ENCODE measurements at regions of chr22 and their contacts with region 1.

Region 1: DNA sequence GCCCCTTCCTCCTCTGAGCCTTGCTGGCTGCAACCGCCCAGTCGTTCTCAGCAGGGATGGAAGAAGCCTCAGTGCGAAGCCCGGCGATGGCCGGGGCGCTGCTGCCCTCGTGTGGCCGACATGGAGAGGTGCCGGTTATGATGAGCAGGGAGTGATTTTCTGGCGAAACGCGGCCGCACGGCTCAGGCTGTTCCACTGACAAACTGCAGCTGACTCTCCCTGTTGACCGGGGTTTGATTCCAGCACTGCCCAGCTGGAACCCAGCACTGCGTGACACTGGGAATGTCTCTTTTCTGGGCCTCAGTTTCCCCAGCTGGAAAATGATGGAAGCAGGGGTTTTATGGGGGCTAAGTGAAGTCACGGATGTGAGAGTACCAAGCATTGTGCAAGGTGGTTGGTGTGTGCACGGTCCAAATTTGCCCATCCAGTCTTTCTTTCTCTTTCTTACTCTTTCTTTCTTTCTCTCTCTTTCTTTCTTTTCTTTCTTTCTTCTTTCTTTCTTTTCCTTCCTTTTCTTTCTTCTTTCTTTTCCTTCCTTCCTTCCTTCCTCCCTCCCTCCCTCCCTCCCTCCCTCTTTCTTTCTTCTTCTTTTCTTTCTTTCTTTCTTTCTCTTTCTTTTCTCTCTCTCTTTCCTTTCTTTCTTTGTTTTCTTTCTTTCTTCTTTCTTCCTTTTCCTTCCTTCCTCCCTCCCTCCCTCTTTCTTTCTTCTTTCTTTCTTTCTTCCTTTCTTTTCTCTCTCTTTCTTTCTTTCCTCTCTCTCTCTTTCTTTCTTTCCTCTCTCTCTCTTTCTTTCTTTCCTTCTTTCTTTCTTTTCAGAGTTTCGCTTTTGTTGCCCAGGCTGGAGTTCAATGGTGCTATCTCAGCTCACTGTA is 25.8 kb upstream of the MPPED1 start:
- DNase-seq: peak; percentile 78
- H3K4me3 Mint-ChIP-seq: no peak overlapping the region
- H3K27ac Mint-ChIP-seq: no peak overlapping the region
- H3K4me1 Mint-ChIP-seq: peaks cover 2% of the 10 kb centered on the region
- H3K27me3 Mint-ChIP-seq: peaks cover 20% of the 10 kb centered on the region

Region 2: GRCh38 chr22:43230971-43231723 is 154.9 kb before region 1 on chr22:
- CTCF ChIA-PET with region 1: interaction called, 8 read pairs
- intact Hi-C with region 1: loop called (anchors 1 kb)
- DNase-seq: peak; percentile 74
- H3K4me3 Mint-ChIP-seq: no peak overlapping the region
- H3K27ac Mint-ChIP-seq: no peak overlapping the region
- H3K4me1 Mint-ChIP-seq: peaks cover 2% of the 10 kb centered on the region
- H3K27me3 Mint-ChIP-seq: no peaks in the 10 kb centered on the region

Region 3: GRCh38 chr22:43273902-43274484 is 112.0 kb before region 1 on chr22:
- CTCF ChIA-PET with region 1: interaction called, 10 read pairs
- intact Hi-C with region 1: loop called (anchors 1 kb)
- DNase-seq: peak; percentile 62
- H3K4me3 Mint-ChIP-seq: no peak overlapping the region
- H3K27ac Mint-ChIP-seq: no peak overlapping the region
- H3K4me1 Mint-ChIP-seq: no peaks in the 10 kb centered on the region
- H3K27me3 Mint-ChIP-seq: no peaks in the 10 kb centered on the region

Region 4: DNA sequence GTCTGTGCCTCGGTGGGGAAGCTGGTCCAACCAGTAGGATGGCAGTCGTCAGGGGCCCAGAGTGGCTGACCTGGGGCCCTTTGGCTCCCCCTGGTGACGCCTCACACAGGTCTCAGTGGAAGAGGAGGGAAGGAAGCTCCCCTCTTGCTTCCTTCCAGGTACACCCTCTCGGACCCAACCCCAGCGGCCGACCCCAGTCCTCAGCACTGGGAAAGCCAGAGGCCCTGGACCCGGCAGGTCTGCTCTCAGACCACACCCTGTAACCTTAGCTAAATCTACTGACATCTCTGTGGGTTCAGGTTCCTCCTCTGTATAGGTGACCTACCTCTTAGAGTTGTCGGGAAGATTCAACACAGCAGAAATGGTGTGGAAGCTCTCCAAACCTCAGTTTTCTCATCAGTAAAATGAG is 39.5 kb before region 1 on chr22:
- CTCF ChIA-PET with region 1: interaction called, 27 read pairs
- intact Hi-C with region 1: loop called (anchors 2 kb)
- DNase-seq: peak; percentile 76
- H3K4me3 Mint-ChIP-seq: no peak overlapping the region
- H3K27ac Mint-ChIP-seq: no peak overlapping the region
- H3K4me1 Mint-ChIP-seq: peaks cover 14% of the 10 kb centered on the region
- H3K27me3 Mint-ChIP-seq: peaks cover 46% of the 10 kb centered on the region

Region 5: GRCh38 chr22:43396934-43397457 is 11.0 kb after region 1 on chr22:
- CTCF ChIA-PET with region 1: no interaction called
- intact Hi-C with region 1: no loop called
- DNase-seq: no peak
- H3K4me3 Mint-ChIP-seq: no peak overlapping the region
- H3K27ac Mint-ChIP-seq: no peak overlapping the region
- H3K4me1 Mint-ChIP-seq: no peaks in the 10 kb centered on the region
- H3K27me3 Mint-ChIP-seq: no peaks in the 10 kb centered on the region

Region 6: GRCh38 chr22:43481568-43482317 is 95.7 kb after region 1 on chr22:
- CTCF ChIA-PET with region 1: no interaction called
- intact Hi-C with region 1: loop called (anchors 1 kb)
- DNase-seq: peak; percentile 66
- H3K4me3 Mint-ChIP-seq: peak overlapping the region; percentile 71
- H3K27ac Mint-ChIP-seq: peak overlapping the region; percentile 74
- H3K4me1 Mint-ChIP-seq: peaks cover 18% of the 10 kb centered on the region
- H3K27me3 Mint-ChIP-seq: no peaks in the 10 kb centered on the region

Region 7: GRCh38 chr22:43884600-43885325 is 498.8 kb after region 1 on chr22:
- CTCF ChIA-PET with region 1: interaction called, 3 read pairs
- intact Hi-C with region 1: loop called (anchors 5 kb)
- DNase-seq: peak; percentile 60
- H3K4me3 Mint-ChIP-seq: no peak overlapping the region
- H3K27ac Mint-ChIP-seq: no peak overlapping the region
- H3K4me1 Mint-ChIP-seq: no peaks in the 10 kb centered on the region
- H3K27me3 Mint-ChIP-seq: peaks cover 25% of the 10 kb centered on the region